ENCODE measurements at regions of chr1 and their contacts with region 1.

Region 1: DNA sequence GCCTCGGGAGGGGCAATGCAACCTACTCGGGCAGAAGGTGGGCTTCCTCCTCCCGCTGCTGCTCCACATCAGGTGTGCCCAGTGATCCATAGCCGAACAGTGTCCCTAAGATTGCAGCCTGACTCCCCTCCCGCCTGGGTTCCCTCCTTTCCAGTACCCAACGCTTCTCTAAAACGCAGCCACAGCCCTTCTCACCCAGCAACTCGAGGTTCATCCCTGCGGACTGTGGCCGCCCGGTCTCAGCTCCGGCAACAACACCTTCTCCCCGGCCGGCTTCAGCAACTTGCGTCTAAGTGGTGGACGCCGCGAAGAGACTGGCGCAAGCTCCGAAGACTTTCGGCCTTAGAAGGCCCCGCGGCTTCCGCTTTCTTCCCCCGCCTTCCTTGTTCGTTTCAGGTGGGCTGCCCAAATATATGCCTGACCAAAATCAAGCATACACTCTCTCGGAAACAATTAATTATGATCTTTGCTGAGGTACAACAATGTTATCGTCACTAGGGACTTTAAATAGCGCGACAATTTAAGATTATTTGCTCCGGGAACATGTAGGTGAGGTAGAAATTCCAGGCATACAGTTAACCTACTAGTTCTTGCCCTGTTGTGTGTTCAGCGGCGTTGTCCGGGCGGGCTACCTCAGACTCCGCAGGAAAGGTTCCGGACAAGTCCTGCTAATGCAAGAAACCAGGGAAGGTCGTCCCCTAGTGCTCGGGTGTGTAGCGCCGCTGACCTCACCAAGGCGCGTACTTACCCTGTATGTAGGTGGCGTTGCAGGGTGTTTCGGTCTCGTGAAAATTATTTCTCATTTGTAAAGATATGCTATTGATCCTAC is at the start of gene RBBP5:
- DNase-seq: peak; percentile 99
- ATAC-seq: peak; percentile 93
- H3K4me3 ChIP-seq: peak within 1 kb of the TSS; percentile 74 to 99 (median 87)
- H3K4me3 Mint-ChIP-seq: peak within 1 kb of the TSS; percentile 98
- H3K27ac ChIP-seq: peak within 1 kb of the TSS; percentile 95 to 96
- H3K27ac Mint-ChIP-seq: peak within 1 kb of the TSS; percentile 100
- H3K4me1 ChIP-seq: peaks cover 31 to 40% of the 10 kb centered on the region in 2 donors
- H3K4me1 Mint-ChIP-seq: peaks cover 48% of the 10 kb centered on the region
- H3K27me3 ChIP-seq: no peaks in the 10 kb centered on the region
- H3K27me3 Mint-ChIP-seq: no peaks in the 10 kb centered on the region
- CTCF ChIP-seq: peak; percentile 73
- total RNA-seq, gene RBBP5: 18.5 and 31.7 TPM in 2 replicates

Region 2: GRCh38 chr1:205162301-205162700 is 40.4 kb after region 1 on chr1:
- CTCF ChIA-PET with region 1: no interaction called
- POLR2A ChIA-PET with region 1: no interaction called
- intact Hi-C with region 1: no loop called
- DNase-seq: no peak
- ATAC-seq: no peak
- H3K4me3 ChIP-seq: no peak overlapping the region
- H3K4me3 Mint-ChIP-seq: no peak overlapping the region
- H3K27ac ChIP-seq: no peak overlapping the region
- H3K27ac Mint-ChIP-seq: no peak overlapping the region
- H3K4me1 ChIP-seq: no peaks in the 10 kb centered on the region
- H3K4me1 Mint-ChIP-seq: no peaks in the 10 kb centered on the region
- H3K27me3 ChIP-seq: no peaks in the 10 kb centered on the region
- H3K27me3 Mint-ChIP-seq: no peaks in the 10 kb centered on the region
- CTCF ChIP-seq: no peak

Region 3: DNA sequence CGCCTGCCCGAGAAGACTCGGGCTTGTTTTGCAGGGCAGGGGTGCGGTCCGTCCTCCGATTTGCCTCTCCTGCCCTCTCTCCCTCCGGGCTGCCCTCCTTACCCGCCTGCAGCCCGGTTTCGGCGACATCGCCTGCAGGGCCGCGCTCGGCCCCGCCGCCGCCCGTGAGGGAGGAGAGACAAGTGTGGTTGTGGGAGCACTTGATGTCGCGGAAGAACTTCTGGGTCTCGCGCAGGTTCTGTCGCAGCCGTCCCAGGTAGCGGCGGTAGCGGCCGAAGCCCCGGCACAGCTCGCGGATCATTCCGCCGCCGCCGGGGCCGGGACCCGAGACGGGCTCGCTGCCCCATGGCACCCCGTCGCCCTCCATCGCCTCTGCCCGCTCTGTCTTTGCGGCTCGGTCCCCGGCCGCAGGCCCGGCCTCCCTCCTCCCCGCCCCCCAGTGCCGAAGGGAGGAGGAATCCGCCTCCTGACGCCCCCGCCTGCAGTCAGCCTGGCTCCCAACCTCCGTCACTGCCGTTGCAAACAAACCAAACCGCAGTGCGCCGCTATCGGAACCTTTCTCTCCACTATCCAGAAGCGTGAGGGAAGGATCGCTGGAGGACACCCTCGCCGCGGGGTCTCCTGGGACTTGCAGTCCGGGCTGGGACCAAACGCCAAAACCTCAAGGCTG is 89.4 kb after region 1 on chr1 and contains the start of gene DSTYK:
- CTCF ChIA-PET with region 1: interaction called, 5 read pairs
- POLR2A ChIA-PET with region 1: no interaction called
- intact Hi-C with region 1: loop called (anchors 1 kb)
- DNase-seq: peak; percentile 96
- ATAC-seq: peak; percentile 85
- H3K4me3 ChIP-seq: peak within 1 kb of the TSS; percentile 70 to 96 (median 91)
- H3K4me3 Mint-ChIP-seq: peak within 1 kb of the TSS; percentile 96
- H3K27ac ChIP-seq: peak within 1 kb of the TSS; percentile 64 to 75
- H3K27ac Mint-ChIP-seq: peak within 1 kb of the TSS; percentile 96
- H3K4me1 ChIP-seq: peaks cover 22 to 25% of the 10 kb centered on the region in 2 donors
- H3K4me1 Mint-ChIP-seq: peaks cover 48% of the 10 kb centered on the region
- H3K27me3 ChIP-seq: no peaks in the 10 kb centered on the region
- H3K27me3 Mint-ChIP-seq: no peaks in the 10 kb centered on the region
- CTCF ChIP-seq: no peak
- total RNA-seq, gene DSTYK: 15.2 and 15.7 TPM in 2 replicates

Region 4: GRCh38 chr1:205247130-205247921 is 125.5 kb after region 1 on chr1:
- CTCF ChIA-PET with region 1: no interaction called
- POLR2A ChIA-PET with region 1: no interaction called
- intact Hi-C with region 1: no loop called
- DNase-seq: no peak
- ATAC-seq: no peak
- H3K4me3 ChIP-seq: no peak overlapping the region
- H3K4me3 Mint-ChIP-seq: no peak overlapping the region
- H3K27ac ChIP-seq: no peak overlapping the region
- H3K27ac Mint-ChIP-seq: no peak overlapping the region
- H3K4me1 ChIP-seq: no peaks in the 10 kb centered on the region
- H3K4me1 Mint-ChIP-seq: no peaks in the 10 kb centered on the region
- H3K27me3 ChIP-seq: no peaks in the 10 kb centered on the region
- H3K27me3 Mint-ChIP-seq: no peaks in the 10 kb centered on the region
- CTCF ChIP-seq: no peak

Measured in B cell (primary cell).